CD4-positive, alpha-beta memory T cell (primary cell): ENCODE measurements at regions of chr4 and their contacts with region 1.

Region 1: DNA sequence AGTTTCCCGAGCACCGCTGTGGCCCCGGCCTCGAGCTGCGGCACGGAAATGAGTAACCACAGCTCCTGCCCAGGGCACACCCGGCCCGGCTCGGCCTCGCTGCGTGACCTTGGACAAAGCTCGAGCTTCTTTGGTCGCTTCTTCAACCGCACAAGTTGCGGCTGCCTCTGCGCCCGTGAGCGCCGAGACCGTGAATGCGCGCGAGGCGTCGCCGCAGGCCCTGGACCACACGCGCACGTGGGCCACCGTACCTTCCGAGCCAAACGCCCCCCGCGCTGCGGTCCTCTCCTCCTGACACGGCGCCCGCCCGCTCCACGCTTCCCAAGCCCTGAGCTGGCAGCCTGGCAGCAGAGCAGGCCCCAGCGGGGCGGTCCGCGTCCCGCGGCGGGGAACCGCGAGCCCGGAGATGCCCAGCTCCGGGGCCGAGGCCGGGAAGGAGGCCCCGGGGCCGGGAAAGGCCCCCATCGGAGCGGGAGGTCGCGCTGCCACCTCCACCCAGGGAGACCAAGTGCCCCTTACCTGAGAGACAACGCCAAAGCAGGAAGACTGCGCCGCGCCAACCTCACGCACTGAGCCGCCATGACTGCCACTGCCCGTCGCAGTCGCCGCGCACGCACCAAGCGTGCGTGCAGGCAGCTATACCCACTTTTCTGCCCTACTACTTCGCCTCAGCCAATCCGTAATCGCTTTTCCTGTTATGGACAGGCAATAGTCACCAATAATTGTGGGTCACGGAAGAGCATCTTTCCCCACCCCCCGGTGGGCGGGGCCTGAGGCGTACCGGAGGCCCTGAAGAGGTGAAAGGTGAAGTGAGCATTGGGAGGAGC is at the start of gene GRPEL1:
- DNase-seq: peak; percentile 100
- H3K4me3 ChIP-seq: peak within 1 kb of the TSS; percentile 65 to 84
- H3K4me3 Mint-ChIP-seq: peak within 1 kb of the TSS; percentile 93 to 98 (median 96)
- H3K27ac ChIP-seq: peak within 1 kb of the TSS; percentile 69
- H3K27ac Mint-ChIP-seq: peak within 1 kb of the TSS; percentile 82 to 98 (median 96)
- H3K4me1 ChIP-seq: peaks cover 46% of the 10 kb centered on the region
- H3K4me1 Mint-ChIP-seq: peaks cover 20 to 65% (median 45%) of the 10 kb centered on the region in 4 donors
- H3K27me3 ChIP-seq: no peaks in the 10 kb centered on the region
- H3K27me3 Mint-ChIP-seq: peaks cover 0 to 2% of the 10 kb centered on the region in 2 donors
- total RNA-seq, gene GRPEL1: 35.3 to 36.0 TPM

Region 2: GRCh38 chr4:6591313-6591712 is 476.4 kb before region 1 on chr4:
- CTCF ChIA-PET with region 1: no interaction called
- POLR2A ChIA-PET with region 1: no interaction called
- intact Hi-C with region 1: no loop called
- DNase-seq: no peak
- H3K4me3 ChIP-seq: no peak overlapping the region
- H3K4me3 Mint-ChIP-seq: no peak overlapping the region
- H3K27ac ChIP-seq: no peak overlapping the region
- H3K27ac Mint-ChIP-seq: peak overlapping the region in 1 of 7 donors; percentile 18
- H3K4me1 ChIP-seq: no peaks in the 10 kb centered on the region
- H3K4me1 Mint-ChIP-seq: no peaks in the 10 kb centered on the region
- H3K27me3 ChIP-seq: no peaks in the 10 kb centered on the region
- H3K27me3 Mint-ChIP-seq: no peaks in the 10 kb centered on the region

Region 3: DNA sequence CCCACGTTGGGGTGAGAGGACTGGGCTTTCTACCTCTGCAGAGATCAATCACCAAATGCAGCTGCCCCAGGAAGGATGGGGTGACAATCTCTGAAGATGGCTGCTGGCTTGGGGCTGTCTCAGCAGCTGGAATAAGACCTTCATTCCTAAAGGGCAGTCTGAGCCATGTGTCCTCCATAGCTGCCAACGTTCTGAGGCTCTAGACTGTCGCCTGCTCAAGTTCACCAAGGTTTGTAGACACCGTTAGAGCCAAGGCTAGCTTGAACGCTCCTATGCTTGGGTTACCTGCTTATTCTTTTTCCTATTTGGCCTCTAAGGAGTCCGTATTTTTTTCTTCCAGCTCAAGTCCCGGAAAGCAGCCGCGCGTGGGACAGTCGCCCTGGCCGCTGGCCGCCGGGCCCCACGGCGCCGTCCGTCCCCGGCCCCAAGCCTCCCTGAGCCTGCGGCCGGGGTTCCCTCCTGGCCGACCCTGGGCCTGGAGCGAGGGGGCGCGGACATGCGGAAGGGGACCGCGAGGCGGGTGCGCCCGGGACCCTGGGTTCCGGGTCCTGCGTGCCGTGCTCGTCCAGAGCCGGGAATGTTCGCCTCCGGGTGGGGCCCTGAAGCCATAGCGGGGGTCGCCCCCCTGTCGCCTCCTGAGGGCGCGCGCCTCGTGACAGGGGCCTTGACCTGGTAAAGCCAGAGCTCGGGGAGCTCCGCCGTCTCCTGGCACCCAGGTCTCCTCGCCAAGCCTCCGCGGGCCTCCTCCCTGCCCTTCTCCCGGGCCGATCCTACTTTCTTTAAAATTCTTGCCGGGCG is 403.9 kb before region 1 on chr4:
- CTCF ChIA-PET with region 1: no interaction called
- POLR2A ChIA-PET with region 1: no interaction called
- intact Hi-C with region 1: no loop called
- DNase-seq: no peak
- H3K4me3 ChIP-seq: peak overlapping the region in 1 of 2 donors; percentile 19
- H3K4me3 Mint-ChIP-seq: peak overlapping the region in 6 of 8 donors; percentile 6 to 72 (median 45)
- H3K27ac ChIP-seq: no peak overlapping the region
- H3K27ac Mint-ChIP-seq: no peak overlapping the region
- H3K4me1 ChIP-seq: peaks cover 19% of the 10 kb centered on the region
- H3K4me1 Mint-ChIP-seq: peaks cover 0 to 15% (median 7%) of the 10 kb centered on the region in 4 donors
- H3K27me3 ChIP-seq: no peaks in the 10 kb centered on the region
- H3K27me3 Mint-ChIP-seq: no peaks in the 10 kb centered on the region

Region 4: DNA sequence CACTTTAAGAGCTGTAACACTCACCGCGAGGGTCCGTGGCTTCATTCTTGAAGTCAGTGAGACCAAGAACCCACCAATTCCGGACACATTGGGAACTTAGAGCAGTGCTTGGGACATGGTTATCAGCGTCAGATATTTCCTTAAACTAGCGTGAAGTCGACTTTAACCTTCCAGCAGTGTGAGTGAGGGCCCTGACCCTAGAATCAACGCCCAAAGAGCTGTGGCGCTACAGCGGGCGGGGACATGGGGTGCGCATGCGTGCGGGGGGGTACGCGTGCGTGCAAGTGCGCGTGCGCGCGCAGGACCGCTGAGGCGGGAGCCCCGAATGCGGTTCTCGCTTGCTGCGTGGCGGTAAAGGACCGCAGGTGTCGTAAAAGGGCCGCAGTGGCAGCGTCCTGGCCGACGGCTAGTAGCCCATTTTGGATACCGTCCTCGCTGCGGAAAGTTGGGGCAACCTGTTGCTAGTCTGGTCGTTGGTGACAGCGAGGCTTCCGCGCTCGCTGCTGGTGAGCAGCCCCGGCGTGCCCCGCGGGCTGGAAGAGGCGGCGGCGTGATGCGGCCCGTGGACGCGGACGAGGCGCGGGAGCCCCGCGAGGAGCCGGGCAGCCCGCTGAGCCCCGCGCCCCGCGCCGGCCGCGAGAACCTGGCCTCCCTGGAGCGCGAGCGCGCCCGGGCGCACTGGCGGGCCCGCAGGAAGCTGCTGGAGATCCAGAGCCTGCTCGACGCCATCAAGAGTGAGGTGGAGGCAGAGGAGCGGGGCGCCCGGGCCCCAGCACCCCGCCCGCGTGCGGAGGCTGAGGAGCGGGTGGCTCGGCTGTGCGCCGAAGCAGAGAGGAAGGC is 393.8 kb before region 1 on chr4:
- CTCF ChIA-PET with region 1: interaction called, 10 read pairs
- POLR2A ChIA-PET with region 1: interaction called, 13 read pairs
- intact Hi-C with region 1: loop called (anchors 1 kb)
- DNase-seq: peak; percentile 94 to 96 (median 96)
- H3K4me3 ChIP-seq: peak overlapping the region; percentile 59 to 65
- H3K4me3 Mint-ChIP-seq: peak overlapping the region; percentile 92 to 99 (median 98)
- H3K27ac ChIP-seq: peak overlapping the region; percentile 71
- H3K27ac Mint-ChIP-seq: peak overlapping the region; percentile 95 to 99 (median 98)
- H3K4me1 ChIP-seq: peaks cover 36% of the 10 kb centered on the region
- H3K4me1 Mint-ChIP-seq: peaks cover 39 to 59% (median 49%) of the 10 kb centered on the region in 4 donors
- H3K27me3 ChIP-seq: no peaks in the 10 kb centered on the region
- H3K27me3 Mint-ChIP-seq: no peaks in the 10 kb centered on the region

Region 5: DNA sequence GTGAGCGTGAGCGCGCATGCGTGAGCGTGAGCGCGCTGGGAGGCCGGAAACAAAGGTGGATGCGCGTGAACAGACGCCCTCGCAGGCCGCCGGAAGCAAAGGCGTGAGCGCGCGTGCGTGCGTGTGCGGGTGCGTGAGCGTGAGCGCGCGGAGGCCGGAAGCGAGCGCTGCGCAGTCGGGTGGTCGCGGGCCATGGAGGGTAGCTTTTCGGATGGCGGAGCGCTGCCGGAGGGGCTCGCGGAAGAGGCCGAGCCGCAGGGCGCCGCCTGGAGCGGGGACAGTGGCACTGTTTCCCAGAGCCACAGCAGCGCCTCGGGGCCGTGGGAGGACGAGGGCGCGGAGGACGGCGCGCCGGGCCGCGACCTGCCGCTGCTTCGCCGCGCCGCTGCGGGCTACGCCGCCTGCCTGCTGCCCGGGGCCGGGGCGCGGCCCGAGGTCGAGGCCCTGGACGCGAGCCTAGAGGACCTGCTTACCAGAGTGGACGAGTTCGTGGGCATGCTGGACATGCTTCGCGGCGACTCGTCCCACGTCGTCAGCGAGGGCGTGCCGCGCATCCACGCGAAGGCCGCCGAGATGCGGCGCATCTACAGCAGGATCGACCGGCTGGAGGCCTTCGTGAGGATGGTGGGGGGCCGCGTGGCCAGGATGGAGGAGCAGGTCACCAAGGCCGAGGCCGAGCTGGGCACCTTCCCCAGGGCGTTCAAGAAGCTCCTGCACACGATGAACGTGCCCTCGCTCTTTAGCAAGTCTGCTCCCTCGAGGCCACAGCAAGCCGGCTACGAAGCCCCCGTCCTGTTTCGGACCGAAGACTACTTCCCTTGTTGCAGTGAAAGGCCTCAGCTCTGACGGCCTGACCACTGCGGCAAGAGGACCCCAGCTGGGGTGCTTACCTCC is 351.4 kb before region 1 on chr4 and contains the start of gene BLOC1S4:
- CTCF ChIA-PET with region 1: interaction called, 114 read pairs
- POLR2A ChIA-PET with region 1: interaction called, 35 read pairs
- intact Hi-C with region 1: loop called (anchors 1 kb)
- DNase-seq: peak; percentile 86 to 94 (median 93)
- H3K4me3 ChIP-seq: peak within 1 kb of the TSS; percentile 38 to 84
- H3K4me3 Mint-ChIP-seq: peak within 1 kb of the TSS; percentile 87 to 99 (median 93)
- H3K27ac ChIP-seq: peak within 1 kb of the TSS; percentile 92
- H3K27ac Mint-ChIP-seq: peak within 1 kb of the TSS; percentile 92 to 99 (median 98)
- H3K4me1 ChIP-seq: peaks cover 38% of the 10 kb centered on the region
- H3K4me1 Mint-ChIP-seq: peaks cover 25 to 48% (median 35%) of the 10 kb centered on the region in 4 donors
- H3K27me3 ChIP-seq: no peaks in the 10 kb centered on the region
- H3K27me3 Mint-ChIP-seq: no peaks in the 10 kb centered on the region
- total RNA-seq, gene BLOC1S4: 35.3 to 37.8 TPM

Region 6: DNA sequence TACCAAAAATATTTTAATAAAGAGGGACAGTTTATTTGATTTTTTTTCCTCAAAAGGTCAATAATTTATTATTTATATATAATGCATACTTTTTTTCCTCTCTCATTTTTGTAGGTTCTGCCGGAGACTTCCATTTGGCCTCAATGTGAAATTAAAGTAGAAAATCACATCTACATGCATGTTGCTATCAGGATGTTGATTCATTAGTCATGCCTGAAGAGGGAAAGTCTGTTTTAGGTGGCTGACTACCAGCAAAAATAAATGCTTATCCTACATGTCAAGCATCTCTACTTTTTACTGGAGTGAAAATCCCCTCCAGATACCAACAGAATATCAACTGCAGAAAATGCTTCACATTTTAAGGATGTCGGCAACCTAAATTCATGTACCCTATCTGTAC is 243.6 kb before region 1 on chr4:
- CTCF ChIA-PET with region 1: no interaction called
- POLR2A ChIA-PET with region 1: no interaction called
- intact Hi-C with region 1: no loop called
- DNase-seq: no peak
- H3K4me3 ChIP-seq: no peak overlapping the region
- H3K4me3 Mint-ChIP-seq: no peak overlapping the region
- H3K27ac ChIP-seq: no peak overlapping the region
- H3K27ac Mint-ChIP-seq: no peak overlapping the region
- H3K4me1 ChIP-seq: peaks cover 5% of the 10 kb centered on the region
- H3K4me1 Mint-ChIP-seq: peaks cover 7 to 23% (median 10%) of the 10 kb centered on the region in 4 donors
- H3K27me3 ChIP-seq: no peaks in the 10 kb centered on the region
- H3K27me3 Mint-ChIP-seq: no peaks in the 10 kb centered on the region

Region 7: GRCh38 chr4:6892190-6892908 is 175.3 kb before region 1 on chr4:
- CTCF ChIA-PET with region 1: interaction called, 22 read pairs
- POLR2A ChIA-PET with region 1: interaction called, 3 read pairs
- intact Hi-C with region 1: loop called (anchors 1 kb)
- DNase-seq: peak; percentile 25 to 56 (median 30)
- H3K4me3 ChIP-seq: peak overlapping the region; percentile 20 to 34
- H3K4me3 Mint-ChIP-seq: peak overlapping the region; percentile 10 to 87 (median 70)
- H3K27ac ChIP-seq: peak overlapping the region; percentile 30
- H3K27ac Mint-ChIP-seq: peak overlapping the region; percentile 13 to 90 (median 82)
- H3K4me1 ChIP-seq: peaks cover 24% of the 10 kb centered on the region
- H3K4me1 Mint-ChIP-seq: peaks cover 12 to 38% (median 24%) of the 10 kb centered on the region in 4 donors
- H3K27me3 ChIP-seq: no peaks in the 10 kb centered on the region
- H3K27me3 Mint-ChIP-seq: no peaks in the 10 kb centered on the region

Region 8: DNA sequence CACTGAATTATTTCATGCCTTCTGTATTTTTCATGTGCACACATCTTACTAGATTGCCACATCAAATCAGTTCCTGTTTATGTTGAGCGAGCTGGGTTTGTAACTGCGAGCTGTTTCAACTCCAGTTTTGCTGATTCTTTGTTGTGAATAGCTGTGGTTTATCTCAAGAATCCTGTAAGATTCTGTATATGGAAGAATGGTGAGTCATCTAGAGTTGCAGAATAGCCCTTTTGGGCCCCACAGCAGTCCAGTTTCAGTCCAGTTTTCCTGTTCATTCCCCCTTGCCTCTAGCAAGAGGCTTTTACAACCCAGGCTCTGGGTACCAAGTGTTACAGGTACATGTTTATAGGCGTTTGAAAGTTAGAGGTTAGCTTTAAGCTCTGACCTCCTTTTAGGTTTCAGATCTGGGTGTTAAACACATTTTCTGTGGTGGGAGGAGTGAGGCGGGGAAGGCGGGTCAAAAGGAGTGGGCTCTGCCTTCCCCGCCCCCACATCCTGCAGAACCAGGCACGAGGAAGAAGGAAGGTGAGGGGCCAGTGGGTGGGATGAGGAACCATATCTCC is 125.3 kb before region 1 on chr4:
- CTCF ChIA-PET with region 1: interaction called, 8 read pairs
- POLR2A ChIA-PET with region 1: interaction called, 11 read pairs
- intact Hi-C with region 1: no loop called
- DNase-seq: peak; percentile 57 to 65 (median 63)
- H3K4me3 ChIP-seq: peak overlapping the region; percentile 25 to 30
- H3K4me3 Mint-ChIP-seq: peak overlapping the region; percentile 73 to 92 (median 82)
- H3K27ac ChIP-seq: peak overlapping the region; percentile 52
- H3K27ac Mint-ChIP-seq: peak overlapping the region; percentile 88 to 98 (median 89)
- H3K4me1 ChIP-seq: peaks cover 79% of the 10 kb centered on the region
- H3K4me1 Mint-ChIP-seq: peaks cover 54 to 87% (median 72%) of the 10 kb centered on the region in 4 donors
- H3K27me3 ChIP-seq: no peaks in the 10 kb centered on the region
- H3K27me3 Mint-ChIP-seq: no peaks in the 10 kb centered on the region

Region 9: GRCh38 chr4:7042697-7043464 is 24.8 kb before region 1 on chr4 and contains the start of gene TADA2B:
- CTCF ChIA-PET with region 1: interaction called, 204 read pairs
- POLR2A ChIA-PET with region 1: interaction called, 231 read pairs
- intact Hi-C with region 1: loop called (anchors 1 kb)
- DNase-seq: peak; percentile 90 to 94 (median 91)
- H3K4me3 ChIP-seq: peak within 1 kb of the TSS; percentile 83 to 91
- H3K4me3 Mint-ChIP-seq: peak within 1 kb of the TSS; percentile 89 to 97 (median 93)
- H3K27ac ChIP-seq: peak within 1 kb of the TSS; percentile 75
- H3K27ac Mint-ChIP-seq: peak within 1 kb of the TSS; percentile 81 to 95 (median 91)
- H3K4me1 ChIP-seq: peaks cover 45% of the 10 kb centered on the region
- H3K4me1 Mint-ChIP-seq: peaks cover 33 to 61% (median 40%) of the 10 kb centered on the region in 4 donors
- H3K27me3 ChIP-seq: no peaks in the 10 kb centered on the region
- H3K27me3 Mint-ChIP-seq: no peaks in the 10 kb centered on the region
- total RNA-seq, gene TADA2B: 46.4 to 49.0 TPM

Region 10: DNA sequence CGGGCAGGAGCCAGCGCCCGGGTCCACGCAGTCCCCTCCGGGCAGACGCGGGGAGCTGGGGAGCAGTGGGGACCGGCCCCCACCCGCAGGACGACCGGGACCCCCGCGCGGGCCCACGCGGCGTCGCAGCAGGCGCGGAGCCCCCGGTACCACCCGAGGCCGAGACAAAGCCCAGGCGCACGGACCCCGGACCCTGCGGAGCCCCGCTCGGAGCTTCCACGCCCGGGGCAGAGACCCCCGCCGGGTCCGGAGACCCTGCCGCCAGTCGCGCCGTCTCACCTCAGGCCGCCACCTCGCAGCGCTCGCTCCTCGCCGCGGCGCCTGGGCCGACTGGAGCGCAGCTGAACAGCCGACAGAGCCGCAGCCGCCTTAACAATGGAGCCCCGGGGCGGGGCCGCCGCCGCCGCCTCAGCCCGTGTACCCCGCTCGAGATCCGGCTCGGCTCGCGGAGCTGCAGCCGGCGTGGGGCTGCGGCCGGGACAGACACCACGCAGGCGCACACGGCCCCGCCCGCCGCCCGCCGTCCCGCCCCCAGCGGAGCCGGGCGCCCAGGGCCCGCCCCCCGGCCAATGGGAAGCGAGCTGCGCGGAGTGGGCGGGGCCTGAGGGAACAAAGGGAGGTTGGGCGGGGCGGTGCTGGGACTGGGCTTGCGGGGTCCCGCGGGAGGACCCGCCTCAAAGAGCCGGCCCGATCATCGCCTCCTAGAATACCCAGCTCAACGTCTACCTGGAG is 871.9 kb after region 1 on chr4 and contains the start of gene AFAP1:
- CTCF ChIA-PET with region 1: no interaction called
- POLR2A ChIA-PET with region 1: no interaction called
- intact Hi-C with region 1: loop called (anchors 10 kb)
- DNase-seq: peak; percentile 86 to 94 (median 92)
- H3K4me3 ChIP-seq: peak within 1 kb of the TSS; percentile 58 to 61
- H3K4me3 Mint-ChIP-seq: peak within 1 kb of the TSS; percentile 66 to 88 (median 74)
- H3K27ac ChIP-seq: peak within 1 kb of the TSS; percentile 70
- H3K27ac Mint-ChIP-seq: peak within 1 kb of the TSS; percentile 23 to 83 (median 45)
- H3K4me1 ChIP-seq: peaks cover 16% of the 10 kb centered on the region
- H3K4me1 Mint-ChIP-seq: peaks cover 12 to 39% (median 26%) of the 10 kb centered on the region in 4 donors
- H3K27me3 ChIP-seq: no peaks in the 10 kb centered on the region
- H3K27me3 Mint-ChIP-seq: peaks cover 0 to 2% of the 10 kb centered on the region in 2 donors
- total RNA-seq, gene AFAP1: 18.8 to 21.8 TPM